Activated T-helper 2 cell treated with anti-CD3 and anti-CD28 coated beads, Interferon-gamma antibody, Interleukin-2, Interleukin-4, amounts not matched to agents 10 μg/mL and 5 μg/mL and 100 μg/mL, durations not matched to agents 14 hours and 24 hours and 36 hours (primary cell): ENCODE measurements at regions of chr1 and their contacts with region 1.

Region 1: DNA sequence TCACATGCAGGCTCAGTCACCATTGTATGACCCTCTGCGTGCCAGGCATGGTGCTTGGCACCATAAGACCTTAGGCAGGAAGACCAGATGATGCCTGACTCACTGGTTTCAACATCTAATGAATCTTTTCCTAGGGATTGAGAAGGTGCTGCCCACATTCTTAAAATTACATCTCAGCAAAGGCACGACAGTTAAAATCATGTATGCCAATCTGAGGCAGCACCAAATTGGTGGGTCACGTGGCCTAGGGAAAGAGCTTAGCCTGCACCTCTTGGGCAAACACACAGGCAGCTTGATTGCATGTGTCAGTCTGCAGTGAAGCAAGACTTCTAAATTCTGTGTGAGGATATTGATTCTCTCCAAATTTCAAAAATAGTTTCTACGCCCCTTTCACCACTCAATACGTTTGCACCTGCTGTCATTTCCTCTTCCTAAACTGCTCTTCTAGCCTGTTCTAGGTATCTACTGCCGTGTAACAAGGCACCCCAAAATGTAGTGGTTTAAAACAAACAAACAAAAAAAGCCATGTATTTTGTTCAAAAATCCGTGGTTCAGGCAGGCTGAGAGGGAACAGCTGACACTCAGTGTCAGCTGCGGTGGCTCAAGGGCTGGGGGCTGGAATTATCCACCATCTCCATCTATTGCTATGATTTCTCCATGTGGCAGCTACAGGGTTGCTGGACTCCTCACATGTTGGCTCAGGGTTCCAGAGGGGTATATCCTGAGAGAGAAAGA is 160.2 kb upstream of the FGGY start:
- DNase-seq: no peak
- H3K4me3 Mint-ChIP-seq: no peak overlapping the region
- H3K27ac Mint-ChIP-seq: no peak overlapping the region
- H3K4me1 Mint-ChIP-seq: peaks cover 41% of the 10 kb centered on the region
- H3K27me3 Mint-ChIP-seq: peaks cover 4% of the 10 kb centered on the region

Region 2: DNA sequence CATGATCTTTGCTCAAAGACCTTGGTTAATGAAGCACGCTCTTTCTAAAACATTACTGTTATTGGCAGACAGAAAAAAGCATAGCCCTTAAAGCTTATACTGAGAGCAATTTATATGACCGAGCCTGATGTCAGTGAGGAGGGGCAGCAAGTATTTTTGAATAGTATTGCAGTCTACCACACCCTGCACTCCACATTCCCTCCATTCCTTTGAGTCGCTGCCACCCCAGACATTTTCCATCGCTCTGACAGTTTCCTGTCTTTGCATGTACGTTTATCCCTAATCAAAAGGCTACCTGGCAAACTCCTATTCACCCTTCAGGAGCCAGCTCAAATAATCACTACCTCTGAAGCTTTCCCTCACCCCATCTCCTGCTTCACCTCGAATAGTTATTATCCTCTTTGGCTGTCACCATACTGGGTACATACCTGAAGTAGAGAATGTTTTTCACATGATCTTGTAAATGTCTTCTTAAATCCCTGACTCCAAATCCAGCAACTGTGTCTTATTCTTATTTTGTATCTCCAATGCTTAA is 347.3 kb before region 1 on chr1:
- intact Hi-C with region 1: loop called (anchors 1 kb)
- DNase-seq: no peak
- H3K4me3 Mint-ChIP-seq: no peak overlapping the region
- H3K27ac Mint-ChIP-seq: no peak overlapping the region
- H3K4me1 Mint-ChIP-seq: peaks cover 1% of the 10 kb centered on the region
- H3K27me3 Mint-ChIP-seq: peaks cover 15% of the 10 kb centered on the region